ENCODE measurements at regions of chr1 and their contacts with region 1.

Region 1: DNA sequence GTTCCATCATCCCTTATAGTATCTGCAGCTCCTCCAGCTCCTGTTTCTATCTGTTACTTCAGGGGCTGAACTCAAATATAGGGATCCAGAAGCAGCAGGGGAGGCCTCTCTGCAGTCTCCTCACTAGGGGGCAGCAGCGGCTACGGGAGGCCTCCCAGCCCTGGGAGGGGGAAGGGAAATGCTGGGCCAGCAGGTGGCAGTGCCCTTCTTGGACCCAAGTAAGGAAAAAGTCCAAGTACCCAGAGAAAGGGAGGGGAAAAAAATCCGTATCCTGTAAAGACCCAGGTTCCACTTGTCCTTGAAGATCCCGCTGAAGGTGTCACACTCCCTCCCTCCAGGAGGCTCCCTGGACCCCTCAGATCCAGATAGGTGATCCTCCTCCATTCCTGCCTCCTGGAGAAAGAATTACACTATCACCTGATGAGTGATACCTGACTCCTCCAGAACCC is 14.1 kb upstream of the NUAK2 start:
- DNase-seq: peak; percentile 66
- H3K4me3 ChIP-seq: no peak overlapping the region
- H3K27ac ChIP-seq: no peak overlapping the region
- H3K4me1 ChIP-seq: peaks cover under 1% of the 10 kb centered on the region
- H3K27me3 ChIP-seq: no peaks in the 10 kb centered on the region
- CTCF ChIP-seq: peak; percentile 96 to 99

Region 2: DNA sequence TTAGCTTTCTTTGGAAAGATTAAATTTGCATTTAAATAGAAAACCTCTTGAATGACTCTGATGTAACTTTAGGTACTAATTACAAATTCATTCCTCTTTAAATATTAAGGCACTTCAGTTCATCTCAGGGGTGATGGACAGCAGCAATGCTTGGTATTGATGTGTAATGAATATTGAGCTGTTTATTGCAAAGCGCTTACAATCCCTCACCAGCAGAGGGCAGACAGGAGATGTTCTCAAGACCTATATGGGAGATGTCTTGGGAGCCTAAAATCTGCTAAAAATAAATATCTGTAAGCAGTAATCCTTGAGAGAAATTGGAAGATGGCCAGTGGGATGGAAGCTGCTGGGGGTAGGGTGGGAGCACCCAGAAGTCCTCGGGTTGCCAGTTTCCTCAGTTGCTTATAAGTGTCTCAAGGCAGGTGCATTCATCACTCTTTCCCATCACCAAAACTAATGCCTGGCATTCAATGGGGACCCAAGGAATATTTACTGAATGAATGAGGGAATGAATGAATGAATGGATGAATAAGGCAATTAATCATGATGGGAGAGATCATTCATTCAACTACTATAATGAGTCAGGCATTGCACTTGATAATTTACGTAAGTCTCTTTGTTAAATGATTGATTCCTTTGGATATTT is 18.7 kb after region 1 on chr1:
- CTCF ChIA-PET with region 1: interaction called, 4 read pairs
- dilution Hi-C with region 1: no loop called
- in situ Hi-C with region 1: no loop called
- intact Hi-C with region 1: loop called (anchors 1 kb)
- DNase-seq: peak; percentile 42
- H3K4me3 ChIP-seq: no peak overlapping the region
- H3K27ac ChIP-seq: no peak overlapping the region
- H3K4me1 ChIP-seq: peaks cover 10% of the 10 kb centered on the region
- H3K27me3 ChIP-seq: no peaks in the 10 kb centered on the region
- CTCF ChIP-seq: peak; percentile 85 to 87

Region 3: DNA sequence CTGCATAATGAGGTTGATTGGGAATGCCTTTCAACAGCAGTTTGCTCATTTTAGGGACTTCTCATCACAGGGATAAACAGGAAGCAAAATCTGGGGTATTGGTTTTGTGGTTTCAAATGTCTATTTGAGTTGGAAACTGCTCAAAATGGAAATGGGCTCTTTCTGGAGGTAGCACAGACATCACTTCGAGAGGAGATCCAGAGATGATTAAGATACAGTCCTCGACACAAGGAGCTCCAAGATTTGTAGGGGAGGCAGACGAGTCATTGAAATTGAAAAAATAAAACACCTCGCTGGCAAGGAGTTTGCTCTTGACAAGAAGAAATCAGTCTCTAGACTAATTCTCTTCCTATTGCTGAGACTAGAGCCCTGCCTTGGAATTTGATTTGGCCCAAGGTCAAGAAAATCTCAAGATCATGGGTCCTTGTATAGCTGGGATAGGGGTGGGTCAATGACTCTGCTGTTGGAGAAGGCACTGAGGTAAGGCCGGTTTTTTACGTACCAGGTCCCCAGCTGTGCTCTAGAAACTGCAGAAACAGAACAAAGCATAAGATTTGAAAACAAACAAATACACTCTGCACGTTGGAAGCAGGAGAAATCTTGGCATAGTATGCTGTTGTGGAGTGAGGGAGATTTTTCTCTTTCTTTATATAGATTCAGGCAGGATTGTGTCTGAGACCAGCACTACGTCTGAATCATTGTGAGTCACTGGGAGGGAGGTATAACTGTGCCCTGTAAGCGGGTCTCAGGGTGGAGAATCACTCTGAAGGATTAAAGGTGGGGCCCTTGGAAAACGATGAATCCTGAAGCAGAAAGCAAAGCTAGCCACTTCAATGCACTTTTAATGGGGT is 38.8 kb after region 1 on chr1:
- CTCF ChIA-PET with region 1: no interaction called
- dilution Hi-C with region 1: loop called (anchors 5 kb)
- in situ Hi-C with region 1: no loop called
- intact Hi-C with region 1: no loop called
- DNase-seq: peak; percentile 82
- H3K4me3 ChIP-seq: no peak overlapping the region
- H3K27ac ChIP-seq: peak overlapping the region; percentile 4
- H3K4me1 ChIP-seq: peaks cover 32% of the 10 kb centered on the region
- H3K27me3 ChIP-seq: no peaks in the 10 kb centered on the region
- CTCF ChIP-seq: no peak

Region 4: GRCh38 chr1:205396967-205397616 is 61.4 kb after region 1 on chr1:
- CTCF ChIA-PET with region 1: no interaction called
- dilution Hi-C with region 1: no loop called
- in situ Hi-C with region 1: no loop called
- intact Hi-C with region 1: loop called (anchors 1 kb)
- DNase-seq: peak; percentile 52
- H3K4me3 ChIP-seq: no peak overlapping the region
- H3K27ac ChIP-seq: no peak overlapping the region
- H3K4me1 ChIP-seq: no peaks in the 10 kb centered on the region
- H3K27me3 ChIP-seq: no peaks in the 10 kb centered on the region
- CTCF ChIP-seq: peak; percentile 77 to 86

Region 5: DNA sequence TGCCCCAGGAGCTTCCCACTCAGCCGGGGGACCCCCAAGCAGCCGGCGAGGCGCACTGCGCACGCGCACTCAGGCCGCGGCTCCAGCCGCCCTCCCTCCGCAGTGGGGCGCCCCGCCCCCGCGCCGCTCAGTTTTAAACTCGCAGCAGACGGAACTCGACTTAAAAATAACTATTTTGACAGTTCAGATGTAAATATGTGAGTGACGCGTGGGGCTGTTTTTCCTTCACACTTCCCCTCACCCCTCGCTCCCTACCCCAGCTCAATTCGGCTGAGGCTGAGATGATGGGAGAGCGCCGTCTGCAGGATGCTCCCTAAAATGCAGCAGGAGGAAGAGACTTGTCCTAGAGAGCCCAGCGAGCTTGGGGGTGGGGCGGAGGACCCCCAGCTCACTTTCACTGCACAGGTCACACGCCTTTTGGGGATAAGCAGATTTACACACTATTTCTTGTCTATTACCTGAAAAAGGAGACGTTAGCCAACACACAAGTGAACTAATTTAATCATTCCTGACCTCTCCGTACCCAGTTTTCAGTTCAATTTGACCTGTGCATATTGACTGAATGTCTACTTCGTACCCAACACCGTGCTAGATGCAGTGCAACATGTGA is 95.1 kb after region 1 on chr1:
- CTCF ChIA-PET with region 1: no interaction called
- dilution Hi-C with region 1: no loop called
- in situ Hi-C with region 1: no loop called
- intact Hi-C with region 1: loop called (anchors 2 kb)
- DNase-seq: no peak
- H3K4me3 ChIP-seq: peak overlapping the region; percentile 26 to 49 (median 47)
- H3K27ac ChIP-seq: no peak overlapping the region
- H3K4me1 ChIP-seq: peaks cover 8% of the 10 kb centered on the region
- H3K27me3 ChIP-seq: peaks cover 3% of the 10 kb centered on the region
- CTCF ChIP-seq: peak; percentile 92 to 93

Measured in mammary epithelial cell (primary cell).